PC-9 (cell line): ENCODE measurements at regions of chr7 and their contacts with region 1.

Region 1: GRCh38 chr7:101321491-101322401 is at the start of gene IFT22:
- DNase-seq: peak; percentile 76 to 89
- H3K4me3 ChIP-seq: peak within 1 kb of the TSS; percentile 85
- H3K27ac ChIP-seq: no peak within 1 kb of the TSS; the same call in 1 of the 2 replicates
- H3K4me1 ChIP-seq: peaks cover 5% of the 10 kb centered on the region; the same call in 1 of the 2 replicates
- H3K27me3 ChIP-seq: peaks cover 10% of the 10 kb centered on the region; the same call in 1 of the 2 replicates
- CTCF ChIP-seq: no peak; the same call in 1 of the 2 replicates
- total RNA-seq, gene IFT22: 47.6 and 53.0 TPM in 2 replicates

Region 2: GRCh38 chr7:101333912-101334311 is 12.2 kb after region 1 on chr7:
- CTCF ChIA-PET with region 1: interaction called, 18 read pairs
- POLR2A ChIA-PET with region 1: interaction called, 5 read pairs
- intact Hi-C with region 1: no loop called
- DNase-seq: no peak
- H3K4me3 ChIP-seq: no peak overlapping the region
- H3K27ac ChIP-seq: no peak overlapping the region
- H3K4me1 ChIP-seq: no peaks in the 10 kb centered on the region
- H3K27me3 ChIP-seq: no peaks in the 10 kb centered on the region
- CTCF ChIP-seq: no peak

Region 3: DNA sequence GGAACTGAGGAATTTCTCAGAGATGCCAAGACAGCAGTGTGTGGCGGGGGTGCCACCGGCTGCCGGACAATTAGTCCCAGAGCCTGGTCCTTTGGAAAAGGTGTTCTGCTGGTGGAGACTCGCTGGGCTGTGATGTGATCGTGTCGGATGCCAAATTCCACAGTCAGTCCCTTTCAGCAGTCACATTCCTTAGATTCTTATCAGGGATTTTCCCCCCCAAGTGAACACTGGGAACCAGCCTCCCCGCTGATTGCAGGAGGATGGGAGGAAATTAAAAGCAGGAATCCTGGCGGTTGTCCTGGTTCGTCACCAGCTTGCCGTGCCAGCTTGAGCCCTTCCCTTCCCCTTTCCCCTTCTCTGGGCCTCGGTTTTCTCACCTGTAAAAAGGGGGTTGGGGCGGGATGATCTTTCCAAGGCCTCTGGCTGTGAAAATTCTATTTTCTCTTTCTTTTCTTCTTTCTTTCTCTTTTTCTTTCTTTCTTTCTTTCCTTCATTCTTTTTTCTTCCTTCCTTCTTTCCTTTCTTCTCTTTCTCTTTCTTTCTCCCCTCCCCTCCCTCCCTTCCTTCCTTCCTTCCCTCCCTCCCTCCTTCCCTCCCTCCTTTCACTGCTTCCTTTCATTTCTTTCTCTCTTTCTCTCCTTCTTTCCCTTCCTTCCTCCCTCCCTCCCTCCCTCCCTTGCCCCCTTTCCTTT is 80.5 kb after region 1 on chr7:
- CTCF ChIA-PET with region 1: interaction called, 6 read pairs
- POLR2A ChIA-PET with region 1: interaction called, 11 read pairs
- intact Hi-C with region 1: no loop called
- DNase-seq: peak; percentile 71 to 81
- H3K4me3 ChIP-seq: peak overlapping the region; percentile 19; the same call in 1 of the 2 replicates
- H3K27ac ChIP-seq: no peak overlapping the region
- H3K4me1 ChIP-seq: peaks cover 14% of the 10 kb centered on the region
- H3K27me3 ChIP-seq: peaks cover 16% of the 10 kb centered on the region; the same call in 1 of the 2 replicates
- CTCF ChIP-seq: no peak

Region 4: GRCh38 chr7:101494602-101495329 is 173.0 kb after region 1 on chr7:
- CTCF ChIA-PET with region 1: no interaction called
- POLR2A ChIA-PET with region 1: no interaction called
- intact Hi-C with region 1: no loop called
- DNase-seq: no peak
- H3K4me3 ChIP-seq: no peak overlapping the region
- H3K27ac ChIP-seq: no peak overlapping the region
- H3K4me1 ChIP-seq: no peaks in the 10 kb centered on the region
- H3K27me3 ChIP-seq: peaks cover 32% of the 10 kb centered on the region; the same call in 1 of the 2 replicates
- CTCF ChIP-seq: no peak

Region 5: GRCh38 chr7:101507791-101508252 is 186.1 kb after region 1 on chr7:
- CTCF ChIA-PET with region 1: no interaction called
- POLR2A ChIA-PET with region 1: no interaction called
- intact Hi-C with region 1: loop called (anchors 10 kb)
- DNase-seq: peak; percentile 46 to 70
- H3K4me3 ChIP-seq: no peak overlapping the region
- H3K27ac ChIP-seq: no peak overlapping the region
- H3K4me1 ChIP-seq: no peaks in the 10 kb centered on the region
- H3K27me3 ChIP-seq: peaks cover 57% of the 10 kb centered on the region
- CTCF ChIP-seq: peak; percentile 87

Region 6: DNA sequence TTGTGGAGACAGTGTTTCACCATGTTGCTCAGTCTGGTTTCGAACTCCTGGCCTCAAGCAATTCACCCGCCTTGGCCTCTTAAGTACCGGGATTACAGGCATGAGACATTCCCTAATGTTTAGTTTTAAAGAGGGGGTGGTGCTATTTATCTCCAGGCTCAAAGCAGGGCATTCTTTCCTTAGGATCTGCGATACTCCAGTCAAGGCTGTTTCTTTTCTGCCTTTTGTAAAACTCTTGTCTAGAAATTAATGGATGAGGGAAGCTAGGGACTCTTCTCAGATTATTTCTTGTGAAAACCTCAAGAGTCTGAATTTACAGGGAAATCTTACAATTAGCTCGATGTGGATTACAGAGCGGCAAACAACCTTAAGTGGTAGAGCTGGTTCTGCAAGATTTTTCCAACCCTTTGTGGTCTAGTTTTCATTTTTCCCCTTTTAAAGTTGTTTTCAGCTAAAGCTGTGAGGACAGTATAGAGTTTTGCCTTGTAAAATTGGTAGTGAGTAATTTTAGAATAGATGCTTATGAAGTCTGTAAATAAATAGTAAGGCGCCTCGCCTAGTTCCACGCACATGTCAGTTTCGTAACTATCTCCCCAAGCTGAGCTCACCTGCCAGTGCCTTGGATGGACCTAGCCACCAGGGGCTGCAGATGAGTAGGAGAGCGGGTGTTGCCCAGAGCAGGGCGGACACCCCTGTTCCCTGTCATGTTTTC is 548.8 kb after region 1 on chr7:
- CTCF ChIA-PET with region 1: no interaction called
- POLR2A ChIA-PET with region 1: no interaction called
- intact Hi-C with region 1: no loop called
- DNase-seq: peak; percentile 76 to 91
- H3K4me3 ChIP-seq: peak overlapping the region; percentile 30; the same call in 1 of the 2 replicates
- H3K27ac ChIP-seq: peak overlapping the region; percentile 86
- H3K4me1 ChIP-seq: peaks cover 32% of the 10 kb centered on the region
- H3K27me3 ChIP-seq: no peaks in the 10 kb centered on the region
- CTCF ChIP-seq: peak; percentile 64